Ascending aorta (tissue), 2 donors: ENCODE measurements at regions of chr7 and their contacts with region 1.

Region 1: DNA sequence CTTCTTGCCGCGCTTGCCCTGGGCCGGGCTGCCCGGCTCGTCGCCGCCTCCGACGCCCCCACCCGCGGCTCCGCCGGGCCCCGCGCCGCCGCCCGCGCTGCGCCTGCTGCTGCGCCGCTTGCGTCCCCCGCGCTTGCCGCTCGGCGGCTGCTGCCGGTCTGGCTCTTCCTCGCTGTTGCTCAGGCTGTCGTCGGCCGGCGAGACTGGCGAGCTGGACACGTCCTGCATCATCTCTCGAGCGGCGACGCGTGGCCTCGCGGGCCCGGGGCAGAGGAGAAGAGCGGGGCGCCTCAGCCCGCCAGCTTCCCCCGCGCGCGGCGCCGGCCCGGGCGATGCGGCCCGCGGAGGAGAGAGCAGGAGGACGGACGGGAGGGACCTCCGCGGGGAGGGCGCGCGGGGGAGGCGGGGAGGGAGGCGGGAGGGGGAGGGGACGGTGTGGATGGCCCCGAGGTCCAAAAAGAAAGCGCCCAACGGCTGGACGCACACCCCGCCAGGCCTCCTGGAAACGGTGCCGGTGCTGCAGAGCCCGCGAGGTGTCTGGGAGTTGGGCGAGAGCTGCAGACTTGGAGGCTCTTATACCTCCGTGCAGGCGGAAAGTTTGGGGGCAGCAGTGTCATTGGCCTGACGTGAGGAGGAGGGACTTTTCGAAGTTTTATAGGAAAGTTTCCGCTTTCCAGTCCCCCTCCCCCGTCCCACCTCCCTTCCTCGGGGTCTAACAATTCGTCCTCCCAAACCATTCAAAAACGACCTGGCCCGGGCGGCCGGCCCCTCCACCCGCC is at the start of gene TWIST1:
- DNase-seq: peak in 1 of 2 donors; percentile 88
- H3K4me3 ChIP-seq: peak within 1 kb of the TSS; percentile 81 to 82
- H3K27ac ChIP-seq: peak within 1 kb of the TSS; percentile 78 to 89
- H3K4me1 ChIP-seq: peaks cover 0 to 13% of the 10 kb centered on the region in 2 donors
- H3K27me3 ChIP-seq: no peaks in the 10 kb centered on the region
- CTCF ChIP-seq: peak in 1 of 3 experiments; percentile 22
- total RNA-seq, gene TWIST1: 2.0 TPM

Region 2: GRCh38 chr7:18221377-18222293 is 895.6 kb before region 1 on chr7:
- intact Hi-C with region 1: loop called (anchors 10 kb)
- DNase-seq: no peak
- H3K4me3 ChIP-seq: no peak overlapping the region
- H3K27ac ChIP-seq: peak overlapping the region; percentile 1 to 35
- H3K4me1 ChIP-seq: peaks cover 9 to 26% of the 10 kb centered on the region in 2 donors
- H3K27me3 ChIP-seq: no peaks in the 10 kb centered on the region
- CTCF ChIP-seq: no peak

Region 3: DNA sequence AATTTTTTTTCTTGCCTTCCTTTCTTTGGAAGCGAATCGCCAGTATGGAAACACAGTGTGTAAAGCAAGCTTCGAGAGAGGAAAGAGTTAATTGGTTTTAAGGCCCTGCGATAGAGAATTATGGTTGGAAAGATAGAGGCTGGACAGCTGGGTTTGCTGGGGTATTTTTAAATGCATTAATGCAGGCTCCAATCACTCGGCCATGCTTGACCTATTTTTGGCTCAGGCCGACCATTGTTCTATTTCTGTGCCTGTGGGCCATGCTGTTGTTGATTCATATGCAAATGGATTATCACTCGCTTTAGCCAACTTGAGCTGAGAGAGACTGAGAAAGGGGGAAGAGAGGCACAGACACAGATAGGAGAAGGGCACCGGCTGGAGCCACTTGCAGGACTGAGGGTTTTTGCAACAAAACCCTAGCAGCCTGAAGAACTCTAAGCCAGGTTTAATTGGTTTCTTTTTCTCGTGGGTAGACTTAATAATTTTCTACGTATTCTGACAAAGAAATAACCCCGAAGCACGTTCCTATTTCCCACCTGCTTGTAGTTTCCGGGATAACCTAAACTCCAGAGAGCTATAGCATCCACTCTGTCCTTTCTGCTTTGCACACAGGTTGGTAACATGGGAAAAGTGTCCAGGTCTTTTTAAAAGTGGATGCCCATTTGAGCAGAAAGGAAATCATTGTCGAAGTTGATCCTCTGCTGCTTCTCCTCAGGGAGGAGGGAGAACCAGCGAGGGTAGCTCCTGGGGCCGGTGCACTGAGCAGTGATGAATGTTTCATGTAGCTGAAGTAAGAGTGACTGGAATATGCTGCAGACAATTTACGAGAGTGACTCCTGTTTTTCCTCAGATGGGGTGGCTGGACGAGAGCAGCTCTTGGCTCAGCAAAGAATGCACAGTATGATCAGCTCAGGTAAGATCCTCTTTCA is 621.6 kb before region 1 on chr7 and contains the start of gene HDAC9:
- intact Hi-C with region 1: loop called (anchors 10 kb)
- DNase-seq: peak in 1 of 2 donors; percentile 71
- H3K4me3 ChIP-seq: peak within 1 kb of the TSS; percentile 55 to 67
- H3K27ac ChIP-seq: peak within 1 kb of the TSS; percentile 77 to 78
- H3K4me1 ChIP-seq: peaks cover 0 to 24% of the 10 kb centered on the region in 2 donors
- H3K27me3 ChIP-seq: no peaks in the 10 kb centered on the region
- CTCF ChIP-seq: no peak
- total RNA-seq, gene HDAC9: 33.4 TPM

Region 4: DNA sequence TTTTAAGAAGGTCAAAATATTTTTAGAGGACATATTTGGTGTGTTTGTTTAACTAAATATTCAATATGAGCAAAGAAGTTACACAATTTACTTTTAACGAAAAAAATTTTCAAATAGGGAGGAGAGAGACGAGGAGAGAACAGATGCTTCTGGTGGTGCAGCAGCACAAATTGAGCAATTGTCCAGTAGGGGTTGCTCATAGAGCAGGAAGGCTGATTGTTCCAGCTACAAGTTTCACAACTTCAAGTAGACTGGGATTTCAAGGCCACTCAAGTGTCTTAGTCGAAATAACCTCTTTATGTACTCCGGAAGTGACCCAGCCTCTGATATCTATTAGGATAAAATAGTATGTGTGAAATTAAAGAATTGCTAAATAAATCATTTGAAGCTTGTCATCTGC is 423.9 kb before region 1 on chr7:
- intact Hi-C with region 1: loop called (anchors 5 kb)
- DNase-seq: peak in 1 of 2 donors; percentile 71
- H3K4me3 ChIP-seq: peak overlapping the region in 1 of 2 donors; percentile 7
- H3K27ac ChIP-seq: peak overlapping the region in 1 of 2 donors; percentile 14
- H3K4me1 ChIP-seq: no peaks in the 10 kb centered on the region
- H3K27me3 ChIP-seq: no peaks in the 10 kb centered on the region
- CTCF ChIP-seq: peak; percentile 43 to 76 (median 52)

Region 5: DNA sequence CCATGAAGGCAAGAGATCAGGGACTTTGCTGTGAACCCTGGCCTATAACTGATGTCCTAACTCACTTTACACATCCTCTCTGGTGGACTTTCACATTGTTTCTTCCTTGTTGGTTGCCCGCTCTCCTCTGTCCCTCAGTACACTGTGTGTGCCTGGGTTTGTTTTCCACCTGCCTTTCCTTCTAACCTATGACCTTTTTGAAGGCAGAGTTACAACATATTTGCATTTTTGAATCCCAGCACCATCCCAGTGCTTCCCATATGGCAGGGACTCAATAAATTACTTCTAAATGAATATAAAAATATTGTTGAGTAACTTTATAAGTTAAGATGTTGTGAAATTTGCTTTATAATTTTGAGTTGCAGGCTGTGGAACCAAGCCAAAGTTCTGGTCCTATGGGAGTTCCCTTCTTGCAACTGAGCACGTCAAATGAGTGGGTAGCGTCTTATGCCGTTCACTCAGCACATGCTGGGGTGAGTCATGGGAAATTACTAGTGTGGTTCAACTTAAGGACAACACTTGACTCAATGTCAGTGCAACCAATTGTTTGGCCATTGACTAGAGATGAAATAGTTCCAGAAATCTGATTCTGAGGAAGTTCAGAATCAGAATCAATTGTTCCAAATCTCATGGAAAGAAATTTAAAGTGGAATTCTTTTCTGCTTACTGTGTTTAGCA is 250.8 kb before region 1 on chr7:
- intact Hi-C with region 1: loop called (anchors 5 kb)
- DNase-seq: peak; percentile 41 to 91
- H3K4me3 ChIP-seq: no peak overlapping the region
- H3K27ac ChIP-seq: peak overlapping the region in 1 of 2 donors; percentile 58
- H3K4me1 ChIP-seq: no peaks in the 10 kb centered on the region
- H3K27me3 ChIP-seq: no peaks in the 10 kb centered on the region
- CTCF ChIP-seq: no peak

Region 6: GRCh38 chr7:19392246-19392645 is 275.0 kb after region 1 on chr7:
- intact Hi-C with region 1: no loop called
- DNase-seq: no peak
- H3K4me3 ChIP-seq: no peak overlapping the region
- H3K27ac ChIP-seq: no peak overlapping the region
- H3K4me1 ChIP-seq: no peaks in the 10 kb centered on the region
- H3K27me3 ChIP-seq: no peaks in the 10 kb centered on the region
- CTCF ChIP-seq: no peak